Breast epithelium (tissue), 4 donors: ENCODE measurements at regions of chr3 and their contacts with region 1.

Region 1: GRCh38 chr3:6892803-6893202 is 31.9 kb downstream of the GRM7 start:
- DNase-seq: no peak
- H3K4me3 ChIP-seq: no peak overlapping the region
- H3K27ac ChIP-seq: no peak overlapping the region
- H3K4me1 ChIP-seq: no peaks in the 10 kb centered on the region
- H3K27me3 ChIP-seq: no peaks in the 10 kb centered on the region
- CTCF ChIP-seq: no peak
- POLR2A ChIP-seq: no peak

Region 2: DNA sequence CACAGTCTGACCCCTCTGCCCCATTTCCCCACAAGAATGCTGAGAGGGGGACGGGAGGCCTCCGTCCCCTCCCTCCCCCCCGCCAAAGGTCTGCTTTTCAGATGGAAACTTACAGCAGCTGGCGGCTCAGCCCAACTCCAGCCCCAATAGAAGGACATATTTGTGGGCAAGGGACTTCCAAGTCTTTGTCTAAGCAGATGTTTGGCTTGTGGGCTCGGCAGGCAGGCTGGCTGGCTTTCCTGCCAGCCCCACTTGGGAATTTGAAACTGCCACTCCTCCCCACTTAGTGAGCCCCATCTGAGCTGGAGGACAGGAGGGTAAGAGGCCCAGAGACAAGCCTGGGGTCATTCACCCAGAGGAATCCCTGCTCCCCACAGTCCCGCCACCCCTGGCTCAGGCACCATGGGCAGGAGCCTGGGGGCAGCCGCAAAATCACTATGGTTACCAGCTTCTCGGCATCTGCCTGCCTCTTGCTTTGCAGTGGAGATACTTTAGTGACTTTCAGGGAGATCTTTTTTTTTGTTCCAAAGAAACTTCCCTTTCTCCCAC is 1662.4 kb after region 1 on chr3:
- intact Hi-C with region 1: loop called (anchors 10 kb)
- DNase-seq: no peak
- H3K4me3 ChIP-seq: no peak overlapping the region
- H3K27ac ChIP-seq: peak overlapping the region; percentile 57 to 87
- H3K4me1 ChIP-seq: no peaks in the 10 kb centered on the region
- H3K27me3 ChIP-seq: no peaks in the 10 kb centered on the region
- CTCF ChIP-seq: no peak
- POLR2A ChIP-seq: no peak